ENCODE measurements at regions of chr9 and their contacts with region 1.

Region 1: GRCh38 chr9:17810728-17811571 is 232.1 kb downstream of the SH3GL2 start:
- DNase-seq: peak in 2 of 3 donors; percentile 25 to 57
- ATAC-seq: peak in 3 of 4 donors; percentile 60 to 66 (median 63)
- H3K4me3 ChIP-seq: no peak overlapping the region
- H3K27ac ChIP-seq: no peak overlapping the region
- H3K4me1 ChIP-seq: peaks cover 0 to 8% (median 0%) of the 10 kb centered on the region in 4 donors
- H3K27me3 ChIP-seq: no peaks in the 10 kb centered on the region
- CTCF ChIP-seq: peak; percentile 82 to 93 (median 92)
- POLR2A ChIP-seq: no peak

Region 2: GRCh38 chr9:17481565-17481964 is 329.4 kb before region 1 on chr9:
- intact Hi-C with region 1: no loop called
- DNase-seq: peak in 1 of 3 donors; percentile 36
- ATAC-seq: peak in 1 of 4 donors; percentile 17
- H3K4me3 ChIP-seq: no peak overlapping the region
- H3K27ac ChIP-seq: no peak overlapping the region
- H3K4me1 ChIP-seq: no peaks in the 10 kb centered on the region
- H3K27me3 ChIP-seq: no peaks in the 10 kb centered on the region
- CTCF ChIP-seq: no peak
- POLR2A ChIP-seq: no peak

Region 3: GRCh38 chr9:17900606-17901005 is 89.7 kb after region 1 on chr9:
- intact Hi-C with region 1: no loop called
- DNase-seq: no peak
- ATAC-seq: no peak
- H3K4me3 ChIP-seq: no peak overlapping the region
- H3K27ac ChIP-seq: no peak overlapping the region
- H3K4me1 ChIP-seq: no peaks in the 10 kb centered on the region
- H3K27me3 ChIP-seq: peaks cover 0 to 3% of the 10 kb centered on the region in 2 donors
- CTCF ChIP-seq: no peak
- POLR2A ChIP-seq: no peak

Region 4: GRCh38 chr9:18208154-18209059 is 397.5 kb after region 1 on chr9:
- intact Hi-C with region 1: loop called (anchors 5 to 10 kb)
- DNase-seq: peak; percentile 30 to 66 (median 62)
- ATAC-seq: peak; percentile 84 to 93 (median 90)
- H3K4me3 ChIP-seq: peak overlapping the region in 1 of 3 donors; percentile 11
- H3K27ac ChIP-seq: peak overlapping the region in 1 of 3 donors; percentile 51
- H3K4me1 ChIP-seq: peaks cover 0 to 22% (median 3%) of the 10 kb centered on the region in 4 donors
- H3K27me3 ChIP-seq: peaks cover 0 to 3% of the 10 kb centered on the region in 2 donors
- CTCF ChIP-seq: peak; percentile 46 to 60 (median 51)
- POLR2A ChIP-seq: no peak